PC-9 (cell line): ENCODE measurements at regions of chr5 and their contacts with region 1.

Region 1: DNA sequence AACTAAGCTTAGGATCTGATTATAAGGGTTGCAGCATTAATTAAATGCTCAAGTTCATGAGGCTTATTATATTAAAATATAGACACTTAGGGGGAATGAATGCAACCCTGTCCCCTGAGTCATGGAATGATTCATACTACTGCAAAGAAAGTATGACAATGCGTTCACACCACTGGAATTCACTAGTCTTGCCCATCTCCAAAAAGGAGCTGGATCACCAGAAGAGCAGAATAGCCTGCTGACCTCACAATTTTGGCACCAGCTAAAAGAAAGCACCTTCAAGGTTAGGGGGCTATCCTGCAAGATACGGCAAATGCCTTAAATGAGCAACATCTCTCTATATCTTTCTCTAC is 32.0 kb upstream of the TMED7 start:
- DNase-seq: peak; percentile 16 to 63
- H3K4me3 ChIP-seq: no peak overlapping the region
- H3K27ac ChIP-seq: peak overlapping the region; percentile 50; the same call in 1 of the 2 replicates
- H3K4me1 ChIP-seq: peaks cover 15% of the 10 kb centered on the region
- H3K27me3 ChIP-seq: no peaks in the 10 kb centered on the region
- CTCF ChIP-seq: no peak

Region 2: GRCh38 chr5:115673596-115673995 is 15.7 kb after region 1 on chr5:
- CTCF ChIA-PET with region 1: no interaction called
- POLR2A ChIA-PET with region 1: interaction called, 10 read pairs
- intact Hi-C with region 1: no loop called
- DNase-seq: no peak
- H3K4me3 ChIP-seq: peak overlapping the region; percentile 53; the same call in 1 of the 2 replicates
- H3K27ac ChIP-seq: no peak overlapping the region
- H3K4me1 ChIP-seq: no peaks in the 10 kb centered on the region
- H3K27me3 ChIP-seq: no peaks in the 10 kb centered on the region
- CTCF ChIP-seq: no peak